ENCODE measurements at regions of chr12 and their contacts with region 1.

Region 1: DNA sequence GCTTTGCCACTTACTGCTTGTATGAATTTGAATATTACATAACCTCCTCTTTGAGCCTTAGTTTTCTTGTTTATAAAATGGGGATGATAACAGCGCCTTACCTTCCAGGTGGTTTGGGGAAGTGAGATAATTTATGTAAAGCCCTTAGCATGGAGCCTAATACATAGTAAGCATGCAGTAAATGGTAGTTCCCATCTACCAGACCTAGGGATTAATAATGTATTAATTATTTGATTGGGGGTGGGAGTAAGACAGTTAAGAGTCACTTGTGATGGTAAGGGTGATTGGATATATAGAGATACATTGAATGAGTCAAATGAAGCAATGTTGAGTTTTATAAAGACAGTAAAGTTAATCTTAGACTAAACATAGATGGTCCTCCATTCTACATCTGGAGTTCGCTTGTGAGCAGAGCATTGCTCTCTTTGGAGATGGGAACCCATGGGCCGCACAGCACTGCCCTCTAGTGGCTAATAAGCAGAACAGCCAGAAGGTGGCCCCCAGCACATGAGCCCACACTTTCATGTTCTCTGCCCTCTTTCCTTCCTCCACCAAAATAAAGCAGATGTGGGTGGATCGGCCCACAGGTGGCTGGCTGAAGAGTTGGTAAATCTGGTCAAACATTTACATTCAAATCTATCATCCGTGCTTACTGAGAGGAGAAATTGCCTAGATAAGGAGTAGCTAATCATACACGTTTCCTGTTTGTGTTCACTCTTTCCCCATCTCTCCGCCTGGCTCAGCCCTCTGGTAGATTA is 26.5 kb upstream of the TAMALIN start:
- DNase-seq: peak; percentile 44
- H3K4me3 ChIP-seq: no peak overlapping the region
- H3K27ac ChIP-seq: no peak overlapping the region
- H3K4me1 ChIP-seq: no peaks in the 10 kb centered on the region
- H3K27me3 ChIP-seq: no peaks in the 10 kb centered on the region
- CTCF ChIP-seq: peak; percentile 93 to 95

Region 2: GRCh38 chr12:51891843-51892242 is 88.4 kb before region 1 on chr12:
- CTCF ChIA-PET with region 1: no interaction called
- dilution Hi-C with region 1: no loop called
- in situ Hi-C with region 1: no loop called
- intact Hi-C with region 1: loop called (anchors 1 kb)
- DNase-seq: no peak
- H3K4me3 ChIP-seq: no peak overlapping the region
- H3K27ac ChIP-seq: no peak overlapping the region
- H3K4me1 ChIP-seq: no peaks in the 10 kb centered on the region
- H3K27me3 ChIP-seq: no peaks in the 10 kb centered on the region
- CTCF ChIP-seq: peak; percentile 24 to 40

Region 3: DNA sequence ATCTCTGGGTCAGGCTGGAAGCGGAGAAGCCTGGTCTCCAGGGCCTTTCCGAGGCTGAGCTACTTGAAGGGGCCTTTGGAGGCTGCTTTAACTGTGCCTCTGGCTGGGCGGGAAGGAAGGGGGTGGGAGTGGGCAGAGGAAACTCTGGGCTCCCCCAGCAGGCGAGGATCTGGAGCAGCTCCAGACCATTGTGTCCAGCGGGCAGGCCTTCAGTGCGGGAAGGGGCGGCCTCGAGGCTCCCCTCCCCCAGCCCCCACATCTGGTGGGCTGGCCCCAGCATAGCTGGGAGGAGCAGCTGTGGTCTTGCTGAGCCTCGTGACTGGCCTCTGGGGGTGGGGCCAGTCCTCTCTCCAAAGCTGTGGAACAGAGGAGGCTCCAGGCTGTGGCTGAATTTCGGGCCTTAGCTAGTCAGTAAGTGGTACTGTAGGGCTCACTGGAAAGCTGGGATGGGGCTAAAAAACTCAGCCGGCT is 30.0 kb after region 1 on chr12:
- CTCF ChIA-PET with region 1: no interaction called
- dilution Hi-C with region 1: no loop called
- in situ Hi-C with region 1: no loop called
- intact Hi-C with region 1: no loop called
- DNase-seq: no peak
- H3K4me3 ChIP-seq: no peak overlapping the region
- H3K27ac ChIP-seq: no peak overlapping the region
- H3K4me1 ChIP-seq: peaks cover 11% of the 10 kb centered on the region
- H3K27me3 ChIP-seq: peaks cover 19% of the 10 kb centered on the region
- CTCF ChIP-seq: no peak

Measured in mammary epithelial cell (primary cell).